ENCODE measurements at regions of chr3 and their contacts with region 1.

Region 1: DNA sequence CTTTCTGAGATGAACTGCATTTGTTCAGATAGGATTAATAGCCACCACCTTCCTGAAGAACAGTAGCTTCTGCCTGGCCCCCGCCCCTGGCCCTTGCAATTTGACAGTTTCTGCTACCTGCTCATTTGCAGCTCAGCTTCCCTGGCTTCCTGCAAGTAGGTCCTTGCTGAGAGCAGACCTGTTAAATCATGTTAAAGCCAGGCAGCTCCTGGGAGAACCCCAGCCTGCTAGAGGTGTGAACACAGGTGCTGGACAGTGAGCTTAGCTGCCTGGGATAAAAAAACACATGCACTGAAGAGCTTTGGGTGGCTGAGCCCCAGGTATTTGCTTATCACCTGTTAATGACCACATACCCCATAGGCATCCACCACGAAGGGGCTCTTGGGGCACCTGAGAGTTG is 143.4 kb downstream of the PTPRG start:
- DNase-seq: no peak
- CTCF ChIP-seq: no peak

Region 2: DNA sequence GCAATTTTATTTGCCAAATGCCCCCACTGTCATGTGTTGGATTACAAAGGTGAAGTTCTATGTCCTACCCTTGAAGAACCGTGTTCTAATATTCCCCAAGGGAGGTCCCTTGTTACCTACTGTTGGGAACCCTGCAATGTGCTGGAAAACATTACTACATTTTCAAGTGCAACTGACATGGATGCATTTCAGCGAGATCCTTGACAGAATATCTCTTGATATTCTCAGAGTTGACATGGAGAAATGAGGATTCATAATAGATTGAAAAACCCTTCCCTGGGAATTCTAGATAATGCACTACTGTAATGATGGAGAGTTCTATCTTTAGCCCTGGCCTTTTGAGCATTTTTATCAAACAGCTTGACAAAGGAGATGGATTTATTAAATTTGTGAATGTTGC is 271.1 kb after region 1 on chr3:
- CTCF ChIA-PET with region 1: no interaction called
- POLR2A ChIA-PET with region 1: interaction called, 12 read pairs
- DNase-seq: no peak
- CTCF ChIP-seq: no peak

Measured in GM10248 (cell line).